ENCODE measurements at regions of chr15 and their contacts with region 1.

Region 1: GRCh38 chr15:77543159-77543882 is 89.4 kb downstream of the LINGO1 start:
- DNase-seq: peak; percentile 92
- ATAC-seq: peak; percentile 93

Region 2: DNA sequence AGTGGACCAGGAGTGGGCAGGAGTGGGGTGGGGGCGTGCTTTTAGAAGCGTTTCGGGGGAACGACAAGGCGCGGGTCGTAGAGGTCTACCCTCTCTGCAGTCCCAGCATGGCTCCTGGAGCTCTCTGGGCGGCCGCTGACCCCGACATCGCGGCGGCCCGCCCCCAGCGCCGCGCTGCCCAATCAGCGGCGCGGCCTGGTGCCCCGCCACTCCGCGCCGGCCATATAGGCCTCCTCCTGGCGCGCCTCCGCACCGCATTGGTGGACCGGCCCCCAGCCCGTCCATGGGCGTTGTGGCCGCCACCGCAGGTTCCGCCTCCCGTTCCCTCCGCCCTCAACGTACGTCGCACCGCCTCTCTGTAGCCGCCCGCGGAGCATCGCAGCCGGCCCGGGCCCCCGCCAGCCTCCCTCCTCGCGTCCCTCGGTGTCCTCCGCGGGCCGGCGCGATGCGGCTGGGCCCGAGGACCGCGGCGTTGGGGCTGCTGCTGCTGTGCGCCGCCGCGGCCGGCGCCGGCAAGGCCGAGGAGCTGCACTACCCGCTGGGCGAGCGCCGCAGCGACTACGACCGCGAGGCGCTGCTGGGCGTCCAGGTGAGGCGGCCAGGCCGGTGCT is 611.8 kb before region 1 on chr15 and contains the start of gene RCN2:
- intact Hi-C with region 1: loop called (anchors 10 kb)
- DNase-seq: peak; percentile 99
- ATAC-seq: peak; percentile 100
- total RNA-seq, gene RCN2: 22.2 TPM

Region 3: DNA sequence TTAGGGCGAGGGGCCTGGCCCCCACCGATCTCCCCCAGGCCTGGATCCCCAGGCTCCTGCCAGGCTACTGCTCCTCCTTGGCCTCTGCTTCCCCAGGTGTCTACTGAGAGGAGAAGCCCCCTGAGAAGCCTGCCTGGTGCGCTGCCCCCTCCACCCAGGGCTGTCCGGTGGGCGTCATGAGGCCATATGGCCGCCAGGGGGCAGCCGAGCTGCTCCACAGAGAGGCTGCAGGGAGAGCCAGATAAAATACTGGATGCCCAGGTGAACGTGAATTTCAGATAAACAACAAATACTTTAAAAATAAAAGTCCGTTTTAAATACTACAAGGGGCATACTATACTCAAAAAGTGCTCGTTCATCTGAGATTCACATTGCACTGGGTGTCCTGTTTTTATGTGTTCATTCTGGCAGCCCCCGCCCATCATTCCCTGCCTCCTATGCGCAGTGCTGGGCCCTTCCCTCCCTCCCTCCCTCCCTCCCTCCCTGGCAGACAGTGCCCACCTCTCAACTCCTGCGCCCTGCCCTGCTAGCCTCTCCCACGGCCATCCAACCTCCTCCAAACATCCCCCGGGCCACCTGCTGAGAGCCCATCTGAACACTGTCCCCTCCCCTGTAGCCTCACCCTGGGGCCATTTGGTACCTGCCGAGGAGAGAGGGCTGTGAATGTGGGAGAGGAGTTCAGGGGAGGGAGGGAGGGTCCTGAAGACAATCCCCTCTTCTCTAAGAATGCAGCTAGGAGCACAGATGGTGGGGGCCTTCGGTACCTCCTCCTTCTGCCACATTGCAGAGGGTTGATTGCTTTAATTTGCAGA is 518.8 kb before region 1 on chr15:
- intact Hi-C with region 1: loop called (anchors 2 kb)
- DNase-seq: peak; percentile 82
- ATAC-seq: peak; percentile 56

Region 4: GRCh38 chr15:77118882-77119321 is 424.4 kb before region 1 on chr15:
- intact Hi-C with region 1: loop called (anchors 2 kb)
- DNase-seq: no peak
- ATAC-seq: peak; percentile 58

Region 5: DNA sequence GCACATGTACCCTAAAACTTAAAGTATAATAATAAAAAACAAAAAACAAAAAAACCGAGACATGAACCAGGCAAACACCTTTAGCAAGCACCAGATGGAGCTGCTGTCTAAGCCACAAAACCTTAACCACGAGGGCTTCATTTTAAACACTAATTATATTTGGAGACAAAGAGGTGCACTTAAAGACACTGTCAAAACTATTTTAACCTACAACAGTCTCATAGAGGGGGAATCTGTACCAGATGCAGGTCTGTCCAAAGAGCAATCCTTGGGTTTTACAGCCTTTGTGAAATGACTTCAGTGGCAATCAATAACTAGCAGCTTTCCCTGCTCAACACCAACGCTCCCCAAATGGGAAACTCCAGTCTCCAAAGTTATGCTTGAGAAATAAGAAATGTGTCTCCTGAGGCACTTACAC is 356.7 kb before region 1 on chr15:
- intact Hi-C with region 1: loop called (anchors 1 kb)
- DNase-seq: no peak
- ATAC-seq: peak; percentile 36

Region 6: GRCh38 chr15:77387365-77388105 is 155.8 kb before region 1 on chr15:
- intact Hi-C with region 1: no loop called
- DNase-seq: no peak
- ATAC-seq: no peak

Region 7: GRCh38 chr15:77419836-77420609 is 123.3 kb before region 1 on chr15 and contains the start of gene PEAK1:
- intact Hi-C with region 1: loop called (anchors 5 kb)
- DNase-seq: peak; percentile 99
- ATAC-seq: peak; percentile 99
- total RNA-seq, gene PEAK1: 66.6 TPM

Region 8: DNA sequence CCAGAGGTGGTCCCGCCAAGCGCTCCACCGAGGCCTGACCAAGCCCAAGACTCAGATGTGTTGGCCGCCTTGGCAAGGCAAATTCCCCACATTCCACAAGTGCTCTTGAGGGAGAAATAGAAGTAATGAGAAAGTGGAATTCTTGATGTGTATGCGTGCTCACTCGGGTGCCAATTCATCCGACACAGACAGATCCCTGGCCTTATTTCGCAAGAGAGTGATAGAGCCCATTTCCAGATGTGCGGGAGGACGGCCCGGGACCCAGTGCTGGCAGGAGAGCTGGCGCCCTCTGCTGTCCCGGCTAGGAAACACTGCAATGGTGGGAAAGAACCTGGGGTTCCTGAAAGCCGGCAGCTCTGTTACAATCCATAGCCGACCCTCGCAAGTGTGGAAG is 46.6 kb before region 1 on chr15:
- intact Hi-C with region 1: loop called (anchors 2 kb)
- DNase-seq: peak; percentile 95
- ATAC-seq: peak; percentile 87